ENCODE measurements at regions of chr11 and their contacts with region 1.

Region 1: DNA sequence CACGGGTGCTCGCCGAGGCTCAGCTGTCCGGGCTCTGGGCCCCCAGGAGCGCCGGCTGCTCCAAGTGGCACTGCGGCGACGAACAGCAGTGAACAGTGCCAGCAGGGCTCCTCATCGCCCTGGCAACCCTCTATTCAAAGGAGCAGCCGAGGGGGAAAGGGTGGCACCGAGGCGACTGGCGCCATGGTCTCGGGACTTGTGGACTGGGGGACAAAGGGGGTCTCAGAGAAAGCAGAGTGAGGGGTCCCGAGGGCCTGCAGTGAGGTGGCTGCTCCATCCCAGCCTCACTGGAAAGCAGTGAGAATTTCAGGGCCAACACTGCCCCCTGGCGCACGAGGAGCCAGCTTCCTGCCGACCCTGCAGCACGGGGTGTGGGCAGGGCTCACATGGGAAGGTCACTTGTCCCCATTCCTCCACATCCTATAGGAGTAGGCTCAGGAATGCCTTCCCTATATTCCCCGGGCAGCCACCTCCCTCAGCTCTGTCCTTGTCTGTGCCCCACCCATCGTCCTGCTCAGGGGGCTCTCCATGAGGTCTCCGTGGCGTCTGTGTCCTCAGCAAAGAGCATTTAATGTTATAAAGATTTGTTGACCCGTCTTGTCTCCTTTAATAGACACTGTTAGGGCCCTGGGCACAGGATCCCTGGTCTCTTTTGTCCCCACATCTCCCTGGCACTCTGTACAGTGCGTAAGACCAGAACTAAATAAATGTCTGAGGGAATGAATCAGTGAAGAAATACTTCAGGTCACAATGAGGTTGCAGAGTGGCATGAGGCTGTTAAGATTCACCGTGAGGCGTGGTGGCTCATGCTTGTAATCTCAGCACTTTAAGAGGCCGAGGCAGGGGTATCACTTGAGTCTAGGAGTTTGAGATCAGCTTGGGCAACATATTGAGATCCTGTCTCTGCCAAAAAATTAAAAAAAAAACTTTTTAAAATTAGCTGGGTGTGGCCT is 26.4 kb downstream of the LRFN4 start:
- DNase-seq: peak in 1 of 2 donors; percentile 74
- H3K4me3 ChIP-seq: peak overlapping the region; percentile 18 to 58
- H3K27ac ChIP-seq: no peak overlapping the region
- H3K4me1 ChIP-seq: no peaks in the 10 kb centered on the region
- H3K27me3 ChIP-seq: no peaks in the 10 kb centered on the region
- CTCF ChIP-seq: peak; percentile 69 to 75 (median 75)

Region 2: DNA sequence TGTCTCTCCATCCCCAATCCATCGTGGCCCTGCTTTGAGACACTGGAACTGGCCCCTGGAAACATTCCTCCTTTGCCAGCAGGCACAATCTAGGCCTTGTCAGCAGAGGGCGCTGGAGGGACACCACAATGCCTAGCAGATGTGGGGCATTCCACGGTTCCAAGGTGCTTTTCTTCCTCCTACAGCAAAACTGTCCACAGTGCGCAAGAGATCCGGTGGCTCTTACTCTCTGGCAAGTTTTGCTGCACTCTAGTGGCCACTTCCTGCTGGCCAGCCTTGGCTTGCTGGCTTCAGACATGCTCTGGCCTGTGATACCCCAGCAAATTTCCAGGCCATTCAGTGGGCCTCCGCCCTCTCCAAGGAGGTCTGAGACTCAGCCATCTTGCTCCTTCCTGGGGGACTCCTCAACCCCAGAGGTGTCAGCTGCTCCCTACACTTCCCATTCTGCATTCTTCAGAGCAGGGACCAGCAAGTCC is 188.5 kb before region 1 on chr11:
- intact Hi-C with region 1: loop called (anchors 1 kb)
- DNase-seq: peak; percentile 50 to 92
- H3K4me3 ChIP-seq: no peak overlapping the region
- H3K27ac ChIP-seq: no peak overlapping the region
- H3K4me1 ChIP-seq: no peaks in the 10 kb centered on the region
- H3K27me3 ChIP-seq: no peaks in the 10 kb centered on the region
- CTCF ChIP-seq: peak; percentile 88 to 93 (median 90)